Mammary epithelial cell (primary cell): ENCODE measurements at regions of chr11 and their contacts with region 1.

Region 1: GRCh38 chr11:9506489-9507276 is 45.9 kb downstream of the ZNF143 start:
- DNase-seq: peak; percentile 60
- H3K4me3 ChIP-seq: no peak overlapping the region
- H3K27ac ChIP-seq: no peak overlapping the region
- H3K4me1 ChIP-seq: no peaks in the 10 kb centered on the region
- H3K27me3 ChIP-seq: no peaks in the 10 kb centered on the region
- CTCF ChIP-seq: peak; percentile 88 to 91

Region 2: GRCh38 chr11:8911029-8911826 is 595.5 kb before region 1 on chr11 and contains the start of gene AKIP1:
- CTCF ChIA-PET with region 1: no interaction called
- dilution Hi-C with region 1: no loop called
- in situ Hi-C with region 1: no loop called
- intact Hi-C with region 1: loop called (anchors 2 kb)
- DNase-seq: peak; percentile 91
- H3K4me3 ChIP-seq: peak within 1 kb of the TSS; percentile 83 to 94 (median 83)
- H3K27ac ChIP-seq: peak within 1 kb of the TSS; percentile 55
- H3K4me1 ChIP-seq: peaks cover 40% of the 10 kb centered on the region
- H3K27me3 ChIP-seq: no peaks in the 10 kb centered on the region
- CTCF ChIP-seq: no peak
- total RNA-seq, gene AKIP1: 31.7 to 35.2 TPM

Region 3: GRCh38 chr11:9170450-9170849 is 336.2 kb before region 1 on chr11:
- CTCF ChIA-PET with region 1: no interaction called
- dilution Hi-C with region 1: no loop called
- in situ Hi-C with region 1: no loop called
- intact Hi-C with region 1: loop called (anchors 1 kb)
- DNase-seq: no peak
- H3K4me3 ChIP-seq: no peak overlapping the region
- H3K27ac ChIP-seq: no peak overlapping the region
- H3K4me1 ChIP-seq: peaks cover 7% of the 10 kb centered on the region
- H3K27me3 ChIP-seq: no peaks in the 10 kb centered on the region
- CTCF ChIP-seq: no peak

Region 4: DNA sequence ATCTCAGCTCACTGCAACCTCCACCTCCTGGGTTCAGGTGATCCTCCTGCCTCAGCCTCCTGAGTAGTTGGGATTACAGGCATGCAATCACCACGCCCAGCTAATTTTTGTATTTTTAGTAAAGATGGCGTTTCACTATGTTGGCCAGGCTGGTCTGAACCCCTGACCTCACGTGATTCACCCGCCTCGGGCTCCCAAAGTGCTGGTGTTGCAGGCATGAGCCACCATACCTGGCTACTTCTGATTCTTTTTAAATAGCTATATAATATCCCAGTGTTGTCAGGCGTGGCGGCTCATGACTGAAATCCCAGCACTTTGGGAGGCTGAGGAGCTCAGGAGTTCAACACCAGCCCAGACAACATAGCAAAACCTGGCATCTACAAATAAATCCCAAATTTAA is 213.0 kb before region 1 on chr11:
- CTCF ChIA-PET with region 1: interaction called, 18 read pairs
- dilution Hi-C with region 1: no loop called
- in situ Hi-C with region 1: no loop called
- intact Hi-C with region 1: no loop called
- DNase-seq: no peak
- H3K4me3 ChIP-seq: no peak overlapping the region
- H3K27ac ChIP-seq: no peak overlapping the region
- H3K4me1 ChIP-seq: no peaks in the 10 kb centered on the region
- H3K27me3 ChIP-seq: no peaks in the 10 kb centered on the region
- CTCF ChIP-seq: no peak

Region 5: GRCh38 chr11:9565822-9566560 is 59.3 kb after region 1 on chr11:
- CTCF ChIA-PET with region 1: no interaction called
- dilution Hi-C with region 1: no loop called
- in situ Hi-C with region 1: no loop called
- intact Hi-C with region 1: loop called (anchors 2 kb)
- DNase-seq: peak; percentile 100
- H3K4me3 ChIP-seq: peak overlapping the region in 1 of 3 experiments; percentile 12
- H3K27ac ChIP-seq: peak overlapping the region; percentile 100
- H3K4me1 ChIP-seq: peaks cover 53% of the 10 kb centered on the region
- H3K27me3 ChIP-seq: no peaks in the 10 kb centered on the region
- CTCF ChIP-seq: no peak